ENCODE measurements at regions of chr5 and their contacts with region 1.

Region 1: DNA sequence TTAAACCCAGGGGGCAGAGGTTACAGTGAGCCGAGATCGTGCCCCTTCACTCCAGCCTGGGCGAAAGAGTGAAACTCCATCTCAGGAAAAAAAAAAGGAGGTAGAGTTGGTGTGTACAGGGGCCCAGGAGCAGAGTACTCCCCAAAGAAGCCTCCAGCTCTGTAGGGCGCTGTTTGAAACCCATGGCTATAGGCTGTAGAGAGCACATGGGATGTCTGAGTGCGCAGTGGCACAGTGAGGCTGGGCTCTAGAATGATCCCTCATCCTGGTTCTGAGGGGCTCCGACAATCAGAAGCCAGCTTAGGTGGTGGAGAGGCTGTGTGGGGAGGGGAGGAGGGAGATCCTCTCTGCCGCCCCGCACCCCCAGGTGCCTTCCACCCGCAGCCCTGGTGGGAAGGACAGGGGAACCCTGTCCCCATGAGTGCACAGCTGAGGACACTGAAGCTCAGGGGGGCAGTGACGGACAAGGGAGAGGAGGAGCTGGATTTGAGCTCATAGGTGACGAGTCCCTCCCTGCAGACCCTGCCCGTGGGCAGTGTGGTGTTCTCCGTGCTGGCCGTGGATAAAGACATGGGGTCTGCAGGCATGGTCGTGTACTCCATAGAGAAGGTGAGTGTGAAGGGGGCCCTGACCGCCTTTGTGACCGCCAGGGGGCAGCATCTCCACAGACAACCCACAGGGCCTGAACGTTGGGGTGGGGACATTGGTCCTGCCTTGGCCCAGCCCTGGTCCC is 24.6 kb downstream of the CDHR2 start:
- DNase-seq: peak; percentile 84 to 87 (median 86)
- ATAC-seq: peak; percentile 94
- H3K4me3 ChIP-seq: no peak overlapping the region
- H3K27ac ChIP-seq: no peak overlapping the region
- H3K4me1 ChIP-seq: peaks cover 0 to 34% of the 10 kb centered on the region in 2 experiments; a peak in 3 of 5 replicates
- H3K27me3 ChIP-seq: peaks cover 13 to 24% of the 10 kb centered on the region in 2 experiments; a peak in 3 of 5 replicates
- CTCF ChIP-seq: peak; percentile 85 to 91 (median 90)
- EP300 ChIP-seq: no peak
- POLR2A ChIP-seq: no peak
- RAD21 ChIP-seq: peak; percentile 69 to 90

Region 2: DNA sequence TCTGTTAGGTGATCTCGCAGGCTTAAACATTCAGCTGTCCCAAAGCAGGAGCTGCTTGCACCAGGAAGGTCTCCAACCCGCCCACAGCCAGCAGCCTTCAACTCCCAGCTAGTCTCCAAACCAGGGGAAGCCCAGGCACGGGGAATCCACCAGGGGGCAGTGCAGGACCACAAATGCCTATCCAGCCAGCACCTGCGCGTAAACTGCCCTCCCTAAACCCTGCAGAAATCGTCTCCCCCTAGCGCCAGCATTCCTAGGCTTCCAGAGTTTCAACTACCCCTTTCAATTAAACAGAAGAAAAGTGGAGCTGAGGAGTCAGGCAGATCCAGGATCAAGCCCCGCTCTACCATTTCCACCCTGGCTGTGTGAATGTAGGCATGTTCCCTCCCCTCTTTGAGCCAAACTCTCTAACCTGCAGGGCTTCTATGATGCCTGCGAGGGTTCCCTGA is 843.9 kb before region 1 on chr5:
- CTCF ChIA-PET with region 1: no interaction called
- POLR2A ChIA-PET with region 1: no interaction called
- in situ Hi-C with region 1: loop called (anchors 25 kb)
- intact Hi-C with region 1: no loop called
- DNase-seq: peak; percentile 88 to 93 (median 92)
- ATAC-seq: peak; percentile 99
- H3K4me3 ChIP-seq: no peak overlapping the region
- H3K27ac ChIP-seq: no peak overlapping the region
- H3K4me1 ChIP-seq: peaks cover 0 to 7% of the 10 kb centered on the region in 2 experiments; a peak in 2 of 5 replicates
- H3K27me3 ChIP-seq: peaks cover 0 to 36% of the 10 kb centered on the region in 2 experiments; a peak in 2 of 5 replicates
- CTCF ChIP-seq: peak; percentile 98 to 99 (median 98)
- EP300 ChIP-seq: no peak
- POLR2A ChIP-seq: no peak
- RAD21 ChIP-seq: peak; percentile 97 to 98

Region 3: DNA sequence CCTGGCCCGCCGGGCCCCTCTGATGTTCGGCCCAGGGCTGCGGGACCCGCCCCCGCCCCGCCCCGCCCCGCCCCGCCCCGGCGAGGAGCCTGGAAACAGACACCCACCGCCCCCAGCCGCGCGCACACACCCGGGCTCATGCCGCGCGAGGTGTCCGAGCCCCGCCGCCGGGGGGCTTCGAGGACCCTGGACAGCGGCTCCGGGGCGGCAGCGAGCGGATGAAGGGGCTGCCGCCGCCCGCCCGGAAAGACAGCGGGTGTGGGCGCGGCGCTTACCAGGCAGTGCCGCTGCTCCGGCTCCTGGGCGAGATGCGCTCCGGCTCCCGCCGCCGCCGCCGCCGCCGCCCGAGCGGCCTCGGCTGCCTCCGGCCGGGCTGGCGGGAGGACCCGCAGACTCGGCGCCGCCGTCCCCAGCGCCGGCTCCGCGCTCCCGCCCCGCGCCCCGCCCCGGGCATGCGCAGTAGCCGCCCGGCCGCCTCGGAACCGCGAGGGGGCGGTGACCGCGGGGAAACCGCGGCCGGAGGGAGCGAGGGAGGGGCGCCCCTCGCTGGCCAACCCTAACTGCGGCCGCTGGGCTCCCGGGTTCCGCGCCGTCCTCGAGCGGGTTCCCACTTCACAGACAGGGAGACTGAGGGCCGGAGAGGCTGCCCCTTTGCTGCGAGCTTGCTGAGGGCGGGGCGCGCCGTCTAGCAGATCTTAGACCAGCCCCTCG is 36.1 kb after region 1 on chr5 and contains the start of gene GPRIN1:
- CTCF ChIA-PET with region 1: no interaction called
- POLR2A ChIA-PET with region 1: no interaction called
- in situ Hi-C with region 1: no loop called
- intact Hi-C with region 1: loop called (anchors 2 kb)
- DNase-seq: peak; percentile 83 to 95 (median 94)
- ATAC-seq: peak; percentile 89
- H3K4me3 ChIP-seq: peak within 1 kb of the TSS; percentile 63
- H3K27ac ChIP-seq: peak within 1 kb of the TSS; percentile 62; the same call in 2 of the 3 replicates
- H3K4me1 ChIP-seq: peaks cover 23 to 30% of the 10 kb centered on the region in 2 experiments; a peak in 4 of 5 replicates
- H3K27me3 ChIP-seq: peaks cover 0 to 6% of the 10 kb centered on the region in 2 experiments; a peak in 1 of 5 replicates
- CTCF ChIP-seq: peak in 2 of 3 experiments; percentile 57 to 95; a peak in 5 of 6 replicates
- EP300 ChIP-seq: no peak
- POLR2A ChIP-seq: no peak
- RAD21 ChIP-seq: peak in 1 of 2 experiments; percentile 54; a peak in 3 of 4 replicates
- polyA plus RNA-seq, gene GPRIN1: 0.15 to 0.22 TPM

Region 4: GRCh38 chr5:176619203-176619568 is 45.5 kb after region 1 on chr5:
- CTCF ChIA-PET with region 1: interaction called, 8 read pairs
- POLR2A ChIA-PET with region 1: no interaction called
- in situ Hi-C with region 1: no loop called
- intact Hi-C with region 1: loop called (anchors 1 kb)
- DNase-seq: peak; percentile 96 to 99 (median 98)
- ATAC-seq: peak; percentile 99
- H3K4me3 ChIP-seq: peak overlapping the region; percentile 19
- H3K27ac ChIP-seq: no peak overlapping the region
- H3K4me1 ChIP-seq: peaks cover 8 to 34% of the 10 kb centered on the region in 2 experiments
- H3K27me3 ChIP-seq: peaks cover 19 to 55% of the 10 kb centered on the region in 2 experiments
- CTCF ChIP-seq: peak; percentile 71 to 81 (median 81)
- EP300 ChIP-seq: no peak
- POLR2A ChIP-seq: no peak
- RAD21 ChIP-seq: peak; percentile 81 to 83

Region 5: DNA sequence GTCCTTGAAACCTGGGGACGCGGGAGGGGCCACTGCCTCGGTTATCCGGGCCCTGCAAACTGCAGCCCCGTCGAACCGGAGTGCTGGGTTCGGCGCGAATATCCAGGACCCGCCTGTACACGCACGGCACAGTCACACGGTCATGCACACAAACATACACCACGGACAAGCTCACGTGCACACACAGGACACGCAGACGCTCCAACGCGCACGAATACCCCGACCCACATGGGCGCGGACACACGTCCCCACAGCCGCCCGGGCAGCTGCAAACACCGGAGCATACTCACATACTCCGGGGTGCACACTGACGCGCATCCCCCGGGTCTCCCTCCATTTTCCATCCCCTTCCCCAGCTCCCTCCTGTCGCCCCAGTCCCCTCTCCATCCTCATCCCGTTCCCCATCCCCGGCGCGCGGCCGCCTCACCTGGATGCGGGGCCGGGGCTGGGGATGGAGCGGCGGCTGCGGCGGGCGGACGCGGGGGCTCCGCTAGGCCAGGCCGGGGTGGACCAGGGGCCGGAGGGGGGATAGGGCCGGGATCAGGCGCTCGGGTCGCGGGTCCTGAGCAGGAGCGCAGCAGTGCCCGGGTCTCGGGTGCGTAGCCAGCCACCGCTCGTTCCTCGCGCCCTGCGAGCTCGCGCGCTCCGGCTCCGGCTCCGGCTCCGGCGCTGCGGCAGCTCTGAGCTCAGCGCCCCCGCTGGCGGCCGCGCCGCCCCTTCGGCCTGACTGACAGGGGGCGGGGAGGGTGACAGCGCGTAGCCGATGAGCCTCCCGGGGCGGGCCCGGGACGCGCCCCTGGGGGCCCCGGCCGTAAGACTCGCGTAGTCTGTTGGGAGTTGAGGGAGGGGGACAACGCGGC is 56.4 kb after region 1 on chr5 and contains the starts of genes EIF4E1B and SNCB:
- CTCF ChIA-PET with region 1: no interaction called
- POLR2A ChIA-PET with region 1: no interaction called
- in situ Hi-C with region 1: no loop called
- intact Hi-C with region 1: no loop called
- DNase-seq: peak; percentile 72 to 89 (median 80)
- ATAC-seq: peak; percentile 96
- H3K4me3 ChIP-seq: no peak within 1 kb of the TSS
- H3K27ac ChIP-seq: no peak within 1 kb of the TSS
- H3K4me1 ChIP-seq: peaks cover 0 to 23% of the 10 kb centered on the region in 2 experiments; a peak in 2 of 5 replicates
- H3K27me3 ChIP-seq: peaks cover 49 to 81% of the 10 kb centered on the region in 2 experiments
- CTCF ChIP-seq: no peak
- EP300 ChIP-seq: no peak
- POLR2A ChIP-seq: no peak
- RAD21 ChIP-seq: no peak
- polyA plus RNA-seq, gene EIF4E1B: not detected
- polyA plus RNA-seq, gene SNCB: not detected

Region 6: DNA sequence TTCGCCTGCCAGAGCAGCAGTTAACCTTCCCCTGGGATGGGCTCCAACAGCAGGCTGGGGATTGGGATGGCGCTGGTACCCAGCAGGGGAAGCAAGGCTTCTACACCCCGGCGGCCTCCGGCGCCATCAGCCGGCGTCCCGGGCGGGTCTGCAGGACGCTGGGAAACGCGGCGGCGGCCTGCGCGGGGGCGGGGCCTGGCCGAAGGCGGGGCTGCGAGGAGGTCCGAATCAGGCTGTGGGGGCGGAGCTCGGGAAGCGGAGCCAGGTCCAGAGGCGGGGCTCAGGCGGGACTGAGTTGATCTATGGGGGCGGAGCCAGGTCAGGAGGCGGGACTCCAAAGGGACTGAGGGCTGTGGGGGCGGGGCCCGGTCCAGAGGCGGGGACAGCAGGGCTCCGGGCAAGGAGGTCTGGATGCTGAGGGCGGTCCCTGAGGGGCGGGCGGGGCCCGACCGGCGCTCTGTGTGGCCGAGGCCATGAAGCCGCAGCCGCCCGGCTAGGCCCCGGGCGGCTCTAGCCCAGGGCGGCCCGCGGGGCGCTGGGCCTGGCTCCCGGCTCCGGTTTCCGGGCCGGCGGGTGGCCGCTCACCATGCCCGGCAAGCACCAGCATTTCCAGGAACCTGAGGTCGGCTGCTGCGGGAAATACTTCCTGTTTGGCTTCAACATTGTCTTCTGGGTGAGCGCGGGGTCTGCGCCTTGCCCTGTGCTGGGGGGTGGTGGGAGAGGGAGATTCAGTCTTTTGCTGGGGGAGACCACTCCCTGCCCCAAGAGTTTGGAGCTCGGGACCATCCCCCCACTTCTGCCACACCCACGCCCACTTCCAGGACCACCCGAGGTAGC is 73.5 kb after region 1 on chr5 and contains the start of gene TSPAN17:
- CTCF ChIA-PET with region 1: no interaction called
- POLR2A ChIA-PET with region 1: no interaction called
- in situ Hi-C with region 1: no loop called
- intact Hi-C with region 1: loop called (anchors 10 kb)
- DNase-seq: peak; percentile 99
- ATAC-seq: peak; percentile 94
- H3K4me3 ChIP-seq: peak within 1 kb of the TSS; percentile 73
- H3K27ac ChIP-seq: peak within 1 kb of the TSS; percentile 78
- H3K4me1 ChIP-seq: peaks cover 50 to 86% of the 10 kb centered on the region in 2 experiments
- H3K27me3 ChIP-seq: no peaks in the 10 kb centered on the region
- CTCF ChIP-seq: peak; percentile 31 to 59 (median 54); a peak in 3 of 6 replicates
- EP300 ChIP-seq: no peak
- POLR2A ChIP-seq: peak; percentile 89
- RAD21 ChIP-seq: peak; percentile 60 to 65
- polyA plus RNA-seq, gene TSPAN17: 0.73 to 2.9 TPM

Region 7: DNA sequence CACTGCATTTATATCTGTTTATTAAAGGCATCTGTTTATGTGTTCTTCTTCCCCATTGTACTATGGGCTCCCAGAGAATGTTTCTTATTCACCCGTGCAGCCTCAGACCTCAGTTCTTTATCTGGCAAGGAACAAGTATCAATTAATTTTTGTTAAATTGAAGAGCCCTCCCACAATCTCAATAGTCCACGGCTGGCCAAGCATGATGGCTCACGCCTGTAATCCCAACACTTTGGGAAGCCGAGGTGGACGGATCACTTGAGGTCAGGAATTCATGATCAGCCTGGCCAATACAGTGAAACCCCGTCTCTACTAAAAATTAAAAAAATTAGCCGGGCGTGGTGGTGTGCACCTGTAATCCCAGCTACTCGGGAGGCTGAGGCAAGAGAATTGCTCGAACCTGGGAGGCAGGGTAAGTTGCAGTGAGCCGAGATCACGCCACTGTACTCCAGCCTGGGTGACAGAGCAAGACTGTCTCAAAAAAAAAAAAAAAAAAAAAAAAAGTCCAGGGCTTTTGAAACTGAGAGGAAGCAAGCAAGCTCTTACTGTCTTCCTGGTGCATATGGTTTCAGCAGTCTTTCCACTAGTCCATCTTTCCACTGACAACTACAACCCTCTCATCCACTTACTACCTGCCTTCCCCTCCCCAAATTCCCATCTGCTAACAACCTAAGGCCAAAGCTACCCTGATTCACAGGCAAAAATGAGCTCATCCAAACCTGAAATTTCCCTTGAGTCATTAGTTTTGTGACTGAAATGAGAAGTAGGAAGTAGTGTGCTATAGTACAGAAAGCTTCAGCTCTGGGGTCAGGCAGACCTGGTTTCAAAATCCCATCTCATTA is 327.8 kb after region 1 on chr5:
- CTCF ChIA-PET with region 1: no interaction called
- POLR2A ChIA-PET with region 1: no interaction called
- in situ Hi-C with region 1: no loop called
- intact Hi-C with region 1: no loop called
- DNase-seq: no peak
- ATAC-seq: no peak
- H3K4me3 ChIP-seq: no peak overlapping the region
- H3K27ac ChIP-seq: no peak overlapping the region
- H3K4me1 ChIP-seq: no peaks in the 10 kb centered on the region
- H3K27me3 ChIP-seq: peaks cover 2 to 7% of the 10 kb centered on the region in 2 experiments; a peak in 2 of 5 replicates
- CTCF ChIP-seq: no peak
- EP300 ChIP-seq: no peak
- POLR2A ChIP-seq: no peak
- RAD21 ChIP-seq: no peak

Region 8: DNA sequence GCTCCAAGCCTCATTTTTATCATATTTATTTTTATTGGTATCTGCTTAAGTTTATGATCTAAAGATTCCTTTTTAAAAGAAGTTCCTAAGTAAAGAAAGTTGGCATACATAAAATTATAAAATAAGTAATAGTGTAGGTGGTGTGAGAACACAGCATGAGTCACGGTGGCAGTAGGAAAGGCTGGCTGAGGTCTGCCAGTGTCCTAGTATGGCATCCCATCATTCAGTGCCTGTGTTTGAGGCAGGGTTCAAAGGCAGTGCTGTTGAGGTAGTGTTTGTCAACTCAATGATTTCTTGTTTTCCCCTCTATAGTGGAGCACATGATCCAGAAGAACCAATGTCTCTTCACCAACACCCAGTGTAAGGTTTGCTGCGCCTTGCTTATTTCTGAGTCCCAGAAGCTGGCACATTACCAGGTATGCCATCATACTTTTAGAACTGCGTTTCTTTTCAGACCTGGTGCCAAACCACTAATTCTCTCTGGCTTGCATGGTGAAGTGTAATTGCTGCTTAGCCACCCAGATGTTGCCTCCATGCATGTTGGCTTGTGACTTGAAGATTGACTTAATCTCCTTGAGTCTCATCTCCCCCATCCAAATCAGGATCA is 467.2 kb after region 1 on chr5:
- CTCF ChIA-PET with region 1: no interaction called
- POLR2A ChIA-PET with region 1: no interaction called
- in situ Hi-C with region 1: no loop called
- intact Hi-C with region 1: no loop called
- DNase-seq: no peak
- ATAC-seq: no peak
- H3K4me3 ChIP-seq: no peak overlapping the region
- H3K27ac ChIP-seq: no peak overlapping the region
- H3K4me1 ChIP-seq: no peaks in the 10 kb centered on the region; a peak in 1 of 5 replicates
- H3K27me3 ChIP-seq: no peaks in the 10 kb centered on the region
- CTCF ChIP-seq: no peak
- EP300 ChIP-seq: no peak
- POLR2A ChIP-seq: no peak
- RAD21 ChIP-seq: no peak

Measured in K562 (cell line).